Activated CD4-positive, alpha-beta memory T cell treated with anti-CD3 and anti-CD28 coated beads for 36 hours (primary cell): ENCODE measurements at regions of chr14 and their contacts with region 1.

Region 1: DNA sequence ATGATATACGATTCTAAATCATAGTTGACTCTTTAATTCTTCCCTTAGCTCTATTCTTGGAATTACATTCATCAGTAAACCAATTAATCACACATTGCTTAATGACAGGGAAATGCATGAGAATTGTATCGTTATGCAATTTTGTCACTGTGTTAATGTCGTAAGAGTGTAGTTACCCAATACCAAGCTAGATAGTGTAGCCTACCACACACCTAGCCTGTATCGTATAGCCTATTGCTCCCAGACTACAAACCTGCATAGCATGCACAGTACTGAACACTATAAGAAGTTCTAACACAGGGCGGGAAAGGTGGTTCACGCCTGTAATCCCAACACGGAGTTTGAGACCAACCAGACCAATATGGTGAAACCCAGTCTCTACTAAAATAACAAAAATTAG is 24.7 kb downstream of the HNRNPC start:
- DNase-seq: no peak
- H3K4me3 Mint-ChIP-seq: no peak overlapping the region
- H3K27ac Mint-ChIP-seq: no peak overlapping the region
- H3K4me1 Mint-ChIP-seq: peaks cover 74% of the 10 kb centered on the region
- H3K27me3 Mint-ChIP-seq: no peaks in the 10 kb centered on the region

Region 2: GRCh38 chr14:21257394-21257909 is 12.9 kb after region 1 on chr14:
- CTCF ChIA-PET with region 1: interaction called, 9 read pairs
- POLR2A ChIA-PET with region 1: interaction called, 30 read pairs
- intact Hi-C with region 1: no loop called
- DNase-seq: no peak
- H3K4me3 Mint-ChIP-seq: peak overlapping the region; percentile 51
- H3K27ac Mint-ChIP-seq: peak overlapping the region; percentile 77
- H3K4me1 Mint-ChIP-seq: peaks cover 75% of the 10 kb centered on the region
- H3K27me3 Mint-ChIP-seq: no peaks in the 10 kb centered on the region